PC-3 (cell line): ENCODE measurements at regions of chr2 and their contacts with region 1.

Region 1: GRCh38 chr2:33412920-33413319 is 63.5 kb upstream of the RASGRP3 start:
- DNase-seq: peak; percentile 73
- ATAC-seq: peak; percentile 72
- H3K4me3 ChIP-seq: no peak overlapping the region
- H3K27ac ChIP-seq: no peak overlapping the region
- H3K4me1 ChIP-seq: peaks cover 7% of the 10 kb centered on the region
- H3K27me3 ChIP-seq: no peaks in the 10 kb centered on the region
- CTCF ChIP-seq: peak; percentile 82

Region 2: DNA sequence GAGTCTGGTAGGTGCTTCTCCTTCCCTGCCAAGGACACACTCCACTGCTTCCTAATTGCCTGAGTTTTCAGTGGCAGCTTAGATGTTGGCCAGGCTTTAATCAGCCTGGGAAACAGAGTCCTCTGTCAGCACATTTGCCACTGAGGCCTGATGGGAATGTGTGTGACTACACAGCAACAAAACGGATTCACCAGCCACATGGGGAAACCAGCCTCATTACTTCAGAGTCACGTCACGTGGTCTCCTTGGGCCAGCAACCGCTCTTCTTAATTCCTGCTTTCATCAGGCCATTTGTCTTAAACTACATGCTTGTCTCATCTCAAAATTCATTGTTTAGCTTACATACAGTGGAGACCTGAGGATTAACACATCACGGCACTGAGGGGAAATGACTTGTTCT is 560.1 kb before region 1 on chr2:
- CTCF ChIA-PET with region 1: no interaction called
- POLR2A ChIA-PET with region 1: no interaction called
- intact Hi-C with region 1: no loop called
- DNase-seq: no peak
- ATAC-seq: no peak
- H3K4me3 ChIP-seq: no peak overlapping the region
- H3K27ac ChIP-seq: no peak overlapping the region
- H3K4me1 ChIP-seq: no peaks in the 10 kb centered on the region
- H3K27me3 ChIP-seq: no peaks in the 10 kb centered on the region
- CTCF ChIP-seq: no peak

Region 3: DNA sequence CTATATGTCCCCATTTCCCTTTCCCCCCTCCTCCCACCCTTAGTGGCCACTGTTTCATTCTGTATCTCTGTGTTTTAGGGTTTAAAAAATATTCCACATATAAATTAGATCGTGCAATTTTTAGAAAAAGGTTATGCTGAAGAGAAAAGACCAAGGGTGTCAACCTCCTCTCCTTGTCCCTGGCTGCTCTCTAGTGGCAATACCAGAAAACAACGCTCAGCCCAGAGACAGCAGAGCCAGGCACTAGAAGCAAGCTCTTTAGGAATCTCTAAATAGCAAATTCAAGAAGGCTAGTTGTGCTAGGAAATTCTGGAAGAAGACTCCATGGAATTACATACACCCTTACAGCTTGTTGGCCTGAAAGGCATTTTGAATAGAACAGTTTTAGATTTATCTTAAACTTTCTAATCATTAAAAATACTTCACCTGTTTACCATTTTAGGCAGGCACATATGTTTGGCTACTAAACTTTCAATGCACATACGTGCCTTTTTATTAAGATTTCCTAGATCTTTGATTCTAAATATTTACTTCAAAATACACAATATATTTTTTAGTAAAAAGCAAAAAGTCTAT is 28.4 kb after region 1 on chr2:
- CTCF ChIA-PET with region 1: interaction called, 16 read pairs
- POLR2A ChIA-PET with region 1: no interaction called
- intact Hi-C with region 1: loop called (anchors 1 kb)
- DNase-seq: peak; percentile 68
- ATAC-seq: peak; percentile 90
- H3K4me3 ChIP-seq: no peak overlapping the region
- H3K27ac ChIP-seq: no peak overlapping the region
- H3K4me1 ChIP-seq: peaks cover 16% of the 10 kb centered on the region
- H3K27me3 ChIP-seq: no peaks in the 10 kb centered on the region
- CTCF ChIP-seq: peak; percentile 85

Region 4: GRCh38 chr2:33607178-33607803 is 194.4 kb after region 1 on chr2:
- CTCF ChIA-PET with region 1: no interaction called
- POLR2A ChIA-PET with region 1: no interaction called
- intact Hi-C with region 1: no loop called
- DNase-seq: no peak
- ATAC-seq: no peak
- H3K4me3 ChIP-seq: no peak overlapping the region
- H3K27ac ChIP-seq: no peak overlapping the region
- H3K4me1 ChIP-seq: no peaks in the 10 kb centered on the region
- H3K27me3 ChIP-seq: no peaks in the 10 kb centered on the region
- CTCF ChIP-seq: no peak